ENCODE measurements at regions of chr7 and their contacts with region 1.

Region 1: DNA sequence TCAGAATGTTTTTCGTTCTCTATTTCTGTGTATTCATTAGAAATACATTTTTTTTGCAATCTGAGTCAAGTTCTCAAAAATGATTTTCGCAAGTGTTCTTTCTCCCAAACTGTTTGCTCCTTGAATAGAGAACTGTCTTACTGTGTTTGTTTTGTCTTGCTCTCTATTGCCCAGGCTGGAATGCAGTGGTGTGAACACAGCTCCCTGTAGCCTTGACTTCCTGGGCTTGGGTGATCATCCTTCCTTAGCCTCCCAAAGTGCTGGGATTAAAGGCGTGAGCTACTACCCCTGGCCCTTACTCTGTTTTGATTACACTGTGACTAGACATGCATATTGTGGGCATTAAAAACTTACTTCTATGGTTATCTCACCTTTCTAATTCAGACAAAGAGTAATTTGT is 56.7 kb downstream of the LUC7L2 start:
- DNase-seq: peak; percentile 59 to 71
- H3K4me3 ChIP-seq: no peak overlapping the region
- H3K27ac ChIP-seq: peak overlapping the region; percentile 40 to 66 (median 47)
- H3K4me1 ChIP-seq: peaks cover 10 to 26% of the 10 kb centered on the region in 2 donors
- H3K27me3 ChIP-seq: no peaks in the 10 kb centered on the region
- CTCF ChIP-seq: no peak
- POLR2A ChIP-seq: no peak

Region 2: DNA sequence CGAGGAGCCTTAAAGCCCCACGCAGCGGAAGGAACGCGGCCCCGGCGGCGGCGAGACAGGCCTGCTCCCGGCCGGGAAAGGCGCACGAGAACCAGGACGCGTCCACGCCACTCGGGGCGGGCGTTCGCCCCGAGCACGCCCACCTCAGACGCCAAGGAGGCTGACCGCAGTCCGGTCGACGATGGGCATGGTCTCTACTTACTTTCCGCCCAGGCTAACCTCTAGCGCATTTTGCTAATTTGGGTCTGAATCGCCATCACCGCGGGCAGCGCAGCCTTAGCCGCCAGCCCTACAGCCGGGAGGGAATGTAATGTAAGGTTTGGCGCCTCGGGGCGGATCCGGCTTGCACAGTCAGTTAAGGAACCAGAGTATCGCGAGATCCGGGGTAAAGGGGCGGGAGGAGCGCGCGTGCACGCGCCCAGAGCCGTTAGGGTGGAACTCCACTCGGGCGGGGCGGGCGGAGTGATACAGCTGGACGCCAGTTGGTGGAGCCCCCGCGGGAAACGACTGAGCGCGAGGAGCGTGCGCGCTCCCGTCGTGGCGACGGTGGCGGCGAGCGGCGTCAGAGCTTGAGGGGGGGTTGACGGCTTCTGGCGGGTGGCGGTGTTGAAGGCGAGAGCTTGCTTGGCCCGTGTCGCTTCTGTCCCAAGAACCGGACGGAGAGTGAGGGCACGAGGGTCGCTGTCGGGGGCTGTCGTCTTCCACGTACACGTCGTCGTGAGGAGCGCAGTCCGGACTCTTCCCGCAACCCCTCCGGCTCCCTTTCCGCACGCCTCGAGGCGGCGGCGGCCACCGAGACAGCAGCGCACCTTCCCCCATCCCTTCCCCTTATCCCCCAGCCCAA is 56.8 kb before region 1 on chr7 and contains the start of gene LUC7L2:
- intact Hi-C with region 1: loop called (anchors 10 kb)
- DNase-seq: peak; percentile 100
- H3K4me3 ChIP-seq: peak within 1 kb of the TSS; percentile 42 to 87 (median 56)
- H3K27ac ChIP-seq: peak within 1 kb of the TSS; percentile 98 to 100 (median 99)
- H3K4me1 ChIP-seq: peaks cover 23 to 24% of the 10 kb centered on the region in 2 donors
- H3K27me3 ChIP-seq: no peaks in the 10 kb centered on the region
- CTCF ChIP-seq: peak in 1 of 6 experiments; percentile 22
- POLR2A ChIP-seq: peak; percentile 85 to 97
- total RNA-seq, gene LUC7L2: 125 to 179 (median 145) TPM